Upper lobe of right lung (tissue), 1 donor: ENCODE measurements at regions of chr5 and their contacts with region 1.

Region 1: GRCh38 chr5:179166886-179167841 is 107.0 kb downstream of the ZNF354C start:
- DNase-seq: peak; percentile 75
- ATAC-seq: peak; percentile 77
- H3K4me3 ChIP-seq: peak overlapping the region; percentile 25
- H3K27ac ChIP-seq: no peak overlapping the region
- H3K4me1 ChIP-seq: peaks cover 9% of the 10 kb centered on the region
- H3K27me3 ChIP-seq: peaks cover 10% of the 10 kb centered on the region
- CTCF ChIP-seq: peak; percentile 83

Region 2: DNA sequence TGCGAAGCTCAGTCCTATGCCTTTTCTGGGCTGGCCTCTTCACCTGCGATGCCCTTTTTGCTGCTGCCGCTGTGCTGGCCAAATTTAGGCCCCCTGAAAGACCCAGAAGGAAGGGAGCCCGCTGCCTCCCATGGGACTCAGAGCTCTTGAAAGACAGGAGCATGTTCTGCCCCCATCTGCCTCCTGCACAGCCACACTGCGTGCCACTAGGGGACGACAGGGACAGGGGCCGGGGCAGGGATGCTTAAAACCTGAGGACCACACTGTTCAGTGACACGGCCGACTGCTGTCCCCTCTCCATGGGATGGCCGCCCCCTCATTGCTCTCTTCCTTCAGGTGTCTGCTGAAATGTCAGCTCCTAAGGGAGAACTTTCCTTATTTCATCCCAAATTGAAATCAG is 45.7 kb after region 1 on chr5:
- intact Hi-C with region 1: no loop called
- DNase-seq: no peak
- ATAC-seq: no peak
- H3K4me3 ChIP-seq: no peak overlapping the region
- H3K27ac ChIP-seq: no peak overlapping the region
- H3K4me1 ChIP-seq: no peaks in the 10 kb centered on the region
- H3K27me3 ChIP-seq: no peaks in the 10 kb centered on the region
- CTCF ChIP-seq: no peak

Region 3: GRCh38 chr5:179495906-179496455 is 328.8 kb after region 1 on chr5:
- intact Hi-C with region 1: loop called (anchors 10 kb)
- DNase-seq: no peak
- ATAC-seq: no peak
- H3K4me3 ChIP-seq: no peak overlapping the region
- H3K27ac ChIP-seq: no peak overlapping the region
- H3K4me1 ChIP-seq: no peaks in the 10 kb centered on the region
- H3K27me3 ChIP-seq: no peaks in the 10 kb centered on the region
- CTCF ChIP-seq: no peak